Sigmoid colon (tissue), 7 donors: ENCODE measurements at regions of chr7 and their contacts with region 1.

Region 1: DNA sequence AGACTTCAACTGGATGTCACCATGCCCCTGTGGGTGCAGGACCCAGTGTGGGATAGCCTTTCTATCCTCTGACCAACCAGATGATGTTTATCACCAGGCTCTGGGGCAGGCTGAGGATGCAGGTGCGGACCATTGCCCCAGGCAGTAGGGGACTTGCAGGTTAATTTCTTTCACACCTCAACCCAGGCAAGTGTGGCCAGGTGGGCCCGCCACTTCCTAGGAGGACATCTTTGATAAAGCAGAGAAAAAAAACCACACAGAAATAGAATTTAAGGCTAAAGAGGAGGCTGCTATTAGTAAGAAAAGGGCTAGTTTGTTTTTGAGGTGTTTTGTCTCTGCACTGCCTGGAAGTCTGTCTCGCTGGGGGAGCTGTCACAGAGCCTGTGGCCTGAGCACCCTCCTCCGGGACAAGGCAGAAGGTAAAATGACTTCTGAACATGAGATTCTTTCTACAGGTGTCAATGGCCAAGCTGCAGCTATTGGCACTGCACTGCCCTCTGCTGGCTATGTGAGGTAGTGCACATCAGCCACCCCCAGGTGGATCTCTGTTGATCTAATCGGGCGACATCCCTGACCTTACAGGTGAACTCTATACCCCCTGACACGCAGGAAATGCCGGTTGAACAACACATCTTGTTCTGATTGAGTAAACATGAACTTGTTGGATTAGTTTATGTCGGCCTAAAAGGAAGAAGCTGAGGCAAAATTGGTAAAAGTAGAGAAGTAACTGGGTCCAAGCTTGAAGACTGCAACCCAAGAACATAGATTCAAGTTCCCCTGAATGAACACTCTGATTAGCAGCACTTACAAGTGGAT is 21.0 kb downstream of the UPP1 start:
- DNase-seq: peak; percentile 82
- H3K4me3 ChIP-seq: no peak overlapping the region
- H3K27ac ChIP-seq: no peak overlapping the region
- H3K4me1 ChIP-seq: no peaks in the 10 kb centered on the region
- H3K27me3 ChIP-seq: no peaks in the 10 kb centered on the region
- CTCF ChIP-seq: peak; percentile 71 to 99 (median 96)
- EP300 ChIP-seq: no peak
- POLR2A ChIP-seq: no peak

Region 2: GRCh38 chr7:47945261-47946001 is 164.6 kb before region 1 on chr7:
- intact Hi-C with region 1: loop called (anchors 1 kb)
- DNase-seq: peak; percentile 80
- H3K4me3 ChIP-seq: no peak overlapping the region
- H3K27ac ChIP-seq: peak overlapping the region in 1 of 4 donors; percentile 18
- H3K4me1 ChIP-seq: no peaks in the 10 kb centered on the region
- H3K27me3 ChIP-seq: no peaks in the 10 kb centered on the region
- CTCF ChIP-seq: peak; percentile 22 to 74 (median 62)
- EP300 ChIP-seq: no peak
- POLR2A ChIP-seq: no peak

Region 3: DNA sequence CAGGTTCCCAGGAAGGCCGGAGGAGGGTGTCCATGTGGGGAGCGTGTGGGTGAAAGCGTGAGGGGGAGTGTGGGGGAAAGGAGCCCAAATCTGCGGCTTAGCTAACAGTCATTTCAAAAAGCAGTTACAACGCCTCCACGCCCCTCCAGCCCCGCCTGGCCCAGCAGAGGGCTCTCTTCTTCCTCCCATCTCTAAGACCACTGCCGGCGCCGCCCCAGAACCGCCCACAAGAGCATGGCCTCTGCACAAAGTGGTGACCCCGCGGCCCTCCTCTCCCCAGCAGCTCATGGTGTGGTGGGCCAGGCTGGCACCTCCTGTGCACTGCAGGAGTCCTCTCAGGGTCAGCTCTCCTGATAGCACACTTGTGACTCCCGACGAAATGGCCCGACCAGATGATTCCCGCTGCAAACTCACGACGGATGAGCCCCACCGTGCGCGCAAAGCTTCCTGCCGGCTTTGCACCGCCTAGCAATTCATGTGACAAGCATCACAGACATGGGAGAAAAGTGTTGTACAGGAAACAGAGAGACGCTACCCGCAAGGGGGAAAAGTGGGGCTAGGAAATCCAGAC is 118.2 kb before region 1 on chr7:
- intact Hi-C with region 1: loop called (anchors 1 kb)
- DNase-seq: peak; percentile 91
- H3K4me3 ChIP-seq: peak overlapping the region; percentile 23 to 57 (median 52)
- H3K27ac ChIP-seq: peak overlapping the region; percentile 25 to 72 (median 56)
- H3K4me1 ChIP-seq: peaks cover 0 to 12% (median 5%) of the 10 kb centered on the region in 4 donors
- H3K27me3 ChIP-seq: no peaks in the 10 kb centered on the region
- CTCF ChIP-seq: peak in 3 of 4 experiments; percentile 33 to 65 (median 49)
- EP300 ChIP-seq: no peak
- POLR2A ChIP-seq: no peak